HCT116 (cell line): ENCODE measurements at regions of chr1 and their contacts with region 1.

Region 1: DNA sequence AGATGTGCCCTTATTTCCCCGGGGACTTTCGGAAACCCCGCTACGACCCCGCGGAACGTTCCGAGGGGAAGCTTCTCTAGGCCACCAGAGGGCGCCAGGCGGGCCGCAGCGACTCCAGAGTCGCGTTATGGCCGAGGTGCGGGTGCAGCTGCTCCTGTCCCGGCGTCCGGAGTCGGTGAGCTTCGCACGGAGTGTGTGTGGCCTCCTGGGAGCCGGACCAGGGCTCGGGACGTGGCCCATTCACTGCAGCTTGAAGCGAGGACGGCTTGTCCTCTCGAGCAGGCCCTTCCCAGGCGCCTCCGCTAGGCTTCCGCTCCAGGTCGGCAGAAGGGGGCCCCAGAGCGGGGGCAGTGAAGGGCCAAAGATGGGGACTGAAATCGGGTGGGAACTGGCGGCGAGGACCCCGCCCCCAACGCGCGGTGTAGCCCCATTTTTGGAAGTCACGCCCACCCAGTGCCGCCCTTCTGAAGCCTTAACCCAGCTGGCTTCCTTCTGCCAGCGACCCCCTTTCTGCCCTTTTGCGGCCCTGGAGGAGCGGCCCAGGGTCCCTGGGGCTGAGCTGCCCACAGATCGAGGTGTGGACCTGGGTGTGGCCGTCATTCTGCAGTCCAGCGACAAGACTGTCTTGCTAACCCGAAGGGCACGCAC is at the start of gene NUDT17:
- DNase-seq: peak; percentile 26
- ATAC-seq: peak; percentile 88
- H3K4me3 ChIP-seq: peak within 1 kb of the TSS; percentile 38 to 49
- H3K27ac ChIP-seq: peak within 1 kb of the TSS; percentile 8; the same call in 1 of the 2 replicates
- H3K4me1 ChIP-seq: peaks cover 4 to 14% of the 10 kb centered on the region in 2 experiments
- H3K27me3 ChIP-seq: no peaks in the 10 kb centered on the region
- CTCF ChIP-seq: peak; percentile 73 to 96 (median 96); a peak in 5 of 6 replicates
- POLR2A ChIP-seq: no peak
- RAD21 ChIP-seq: peak; percentile 67
- total RNA-seq, gene NUDT17: 1.8 TPM

Region 2: GRCh38 chr1:145858894-145859490 is 13.4 kb after region 1 on chr1 and contains the start of gene PIAS3:
- CTCF ChIA-PET with region 1: interaction called, 87 read pairs
- POLR2A ChIA-PET with region 1: interaction called, 17 read pairs
- RAD21 ChIA-PET with region 1: interaction called in 1 of 2 experiments, 3 read pairs
- intact Hi-C with region 1: no loop called
- DNase-seq: peak; percentile 82
- ATAC-seq: peak; percentile 87
- H3K4me3 ChIP-seq: peak within 1 kb of the TSS; percentile 73 to 75
- H3K27ac ChIP-seq: peak within 1 kb of the TSS; percentile 71
- H3K4me1 ChIP-seq: peaks cover 11 to 15% of the 10 kb centered on the region in 2 experiments; a peak in 3 of 4 replicates
- H3K27me3 ChIP-seq: no peaks in the 10 kb centered on the region
- CTCF ChIP-seq: no peak
- POLR2A ChIP-seq: peak; percentile 13
- RAD21 ChIP-seq: no peak
- total RNA-seq, gene PIAS3: 31.2 TPM

Region 3: DNA sequence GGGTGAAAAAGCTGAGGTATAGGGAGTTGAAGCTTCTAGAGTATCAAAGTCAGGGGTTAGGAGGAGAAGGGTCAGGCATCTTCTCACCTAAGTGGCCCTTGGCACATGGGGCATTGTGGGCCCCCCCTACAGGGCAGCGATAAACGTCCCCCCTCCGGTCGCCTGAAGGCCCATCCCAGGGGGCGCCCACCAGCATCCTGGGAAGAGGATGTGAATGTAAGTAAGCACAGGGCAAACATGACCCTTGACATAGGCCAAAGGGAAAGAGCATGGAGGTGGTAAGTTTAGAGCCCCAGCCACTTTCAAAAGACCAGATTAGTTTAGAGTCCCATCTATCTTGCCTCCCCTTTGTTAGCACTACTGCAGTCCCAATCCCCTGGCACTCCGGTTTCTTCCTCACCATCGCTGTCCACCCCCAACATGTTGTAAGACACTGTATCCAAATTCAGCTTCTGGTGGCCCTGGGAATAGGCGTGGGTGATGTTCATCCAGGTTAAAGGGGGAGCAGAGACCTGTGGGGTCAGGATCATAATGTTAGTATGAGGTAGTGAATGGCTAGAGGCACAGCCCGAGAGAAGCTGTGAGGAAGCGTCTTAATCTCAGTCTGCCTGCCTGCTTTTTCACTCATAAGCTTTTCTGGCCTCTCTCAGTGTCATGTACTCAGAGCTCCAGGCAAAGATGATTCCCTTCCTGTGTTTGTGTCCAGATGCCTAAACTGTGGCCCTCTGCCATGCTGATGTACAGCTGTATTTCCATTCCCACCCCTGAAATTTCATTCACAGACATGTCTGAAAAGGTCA is 61.5 kb after region 1 on chr1:
- CTCF ChIA-PET with region 1: no interaction called
- POLR2A ChIA-PET with region 1: no interaction called
- RAD21 ChIA-PET with region 1: no interaction called
- intact Hi-C with region 1: loop called (anchors 5 kb)
- DNase-seq: no peak
- ATAC-seq: no peak
- H3K4me3 ChIP-seq: no peak overlapping the region
- H3K27ac ChIP-seq: no peak overlapping the region
- H3K4me1 ChIP-seq: peaks cover 5 to 14% of the 10 kb centered on the region in 2 experiments; a peak in 3 of 4 replicates
- H3K27me3 ChIP-seq: no peaks in the 10 kb centered on the region
- CTCF ChIP-seq: no peak
- POLR2A ChIP-seq: no peak
- RAD21 ChIP-seq: no peak

Region 4: GRCh38 chr1:146012737-146013403 is 167.2 kb after region 1 on chr1:
- CTCF ChIA-PET with region 1: interaction called, 13 read pairs
- POLR2A ChIA-PET with region 1: no interaction called
- RAD21 ChIA-PET with region 1: interaction called in 1 of 2 experiments, 3 read pairs
- intact Hi-C with region 1: loop called (anchors 1 kb)
- DNase-seq: peak; percentile 83
- ATAC-seq: peak; percentile 84
- H3K4me3 ChIP-seq: no peak overlapping the region
- H3K27ac ChIP-seq: no peak overlapping the region
- H3K4me1 ChIP-seq: peaks cover 0 to 5% of the 10 kb centered on the region in 2 experiments; a peak in 2 of 4 replicates
- H3K27me3 ChIP-seq: no peaks in the 10 kb centered on the region
- CTCF ChIP-seq: peak; percentile 58 to 95 (median 86)
- POLR2A ChIP-seq: no peak
- RAD21 ChIP-seq: peak; percentile 97